CD14-positive monocyte (primary cell): ENCODE measurements at regions of chr3 and their contacts with region 1.

Region 1: GRCh38 chr3:49339945-49340800 is at the start of gene USP4:
- DNase-seq: peak; percentile 83 to 97 (median 86)
- H3K4me3 ChIP-seq: peak within 1 kb of the TSS; percentile 87 to 95 (median 89)
- H3K4me3 Mint-ChIP-seq: peak within 1 kb of the TSS; percentile 95 to 97
- H3K27ac ChIP-seq: peak within 1 kb of the TSS; percentile 98 to 99
- H3K27ac Mint-ChIP-seq: peak within 1 kb of the TSS; percentile 97 to 100 (median 100)
- H3K4me1 ChIP-seq: peaks cover 70 to 80% of the 10 kb centered on the region in 2 donors
- H3K4me1 Mint-ChIP-seq: peaks cover 55% of the 10 kb centered on the region
- H3K27me3 ChIP-seq: no peaks in the 10 kb centered on the region
- H3K27me3 Mint-ChIP-seq: peaks cover 0 to 7% (median 0%) of the 10 kb centered on the region in 3 donors
- CTCF ChIP-seq: peak; percentile 44
- polyA plus RNA-seq, gene USP4: 68.6 to 125 (median 78.9) TPM

Region 2: GRCh38 chr3:49358217-49358883 is 18.2 kb after region 1 on chr3 and contains the start of gene GPX1:
- intact Hi-C with region 1: loop called (anchors 2 kb)
- DNase-seq: peak; percentile 87 to 89 (median 88)
- H3K4me3 ChIP-seq: peak within 1 kb of the TSS; percentile 87 to 95 (median 93)
- H3K4me3 Mint-ChIP-seq: peak within 1 kb of the TSS; percentile 98 to 99
- H3K27ac ChIP-seq: peak within 1 kb of the TSS; percentile 86 to 94
- H3K27ac Mint-ChIP-seq: peak within 1 kb of the TSS; percentile 97 to 99 (median 98)
- H3K4me1 ChIP-seq: peaks cover 42 to 58% of the 10 kb centered on the region in 2 donors
- H3K4me1 Mint-ChIP-seq: peaks cover 45% of the 10 kb centered on the region
- H3K27me3 ChIP-seq: no peaks in the 10 kb centered on the region
- H3K27me3 Mint-ChIP-seq: peaks cover 2% of the 10 kb centered on the region in 3 donors
- CTCF ChIP-seq: no peak
- polyA plus RNA-seq, gene GPX1: 1,287 to 2,105 (median 1,394) TPM

Region 3: GRCh38 chr3:49370585-49371290 is 30.6 kb after region 1 on chr3:
- intact Hi-C with region 1: loop called in 1 of 2 experiments (anchors 5 kb)
- DNase-seq: no peak
- H3K4me3 ChIP-seq: no peak overlapping the region
- H3K4me3 Mint-ChIP-seq: no peak overlapping the region
- H3K27ac ChIP-seq: peak overlapping the region in 1 of 2 donors; percentile 65
- H3K27ac Mint-ChIP-seq: peak overlapping the region in 4 of 7 donors; percentile 17 to 78 (median 35)
- H3K4me1 ChIP-seq: peaks cover 16 to 30% of the 10 kb centered on the region in 2 donors
- H3K4me1 Mint-ChIP-seq: peaks cover 30% of the 10 kb centered on the region
- H3K27me3 ChIP-seq: no peaks in the 10 kb centered on the region
- H3K27me3 Mint-ChIP-seq: no peaks in the 10 kb centered on the region
- CTCF ChIP-seq: no peak

Region 4: GRCh38 chr3:49387721-49388120 is 47.5 kb after region 1 on chr3:
- intact Hi-C with region 1: loop called in 1 of 2 experiments (anchors 5 kb)
- DNase-seq: no peak
- H3K4me3 ChIP-seq: no peak overlapping the region
- H3K4me3 Mint-ChIP-seq: no peak overlapping the region
- H3K27ac ChIP-seq: peak overlapping the region; percentile 63 to 79
- H3K27ac Mint-ChIP-seq: peak overlapping the region; percentile 65 to 90 (median 85)
- H3K4me1 ChIP-seq: peaks cover 41 to 60% of the 10 kb centered on the region in 2 donors
- H3K4me1 Mint-ChIP-seq: peaks cover 62% of the 10 kb centered on the region
- H3K27me3 ChIP-seq: no peaks in the 10 kb centered on the region
- H3K27me3 Mint-ChIP-seq: peaks cover 0 to 3% (median 2%) of the 10 kb centered on the region in 3 donors
- CTCF ChIP-seq: no peak

Region 5: GRCh38 chr3:49411968-49412631 is 71.9 kb after region 1 on chr3 and contains the starts of genes RHOA and TCTA:
- intact Hi-C with region 1: loop called in 1 of 2 experiments (anchors 5 kb)
- DNase-seq: peak; percentile 100
- H3K4me3 ChIP-seq: peak within 1 kb of the TSS; percentile 91 to 99 (median 99)
- H3K4me3 Mint-ChIP-seq: peak within 1 kb of the TSS; percentile 87 to 93
- H3K27ac ChIP-seq: peak within 1 kb of the TSS; percentile 90
- H3K27ac Mint-ChIP-seq: peak within 1 kb of the TSS; percentile 91 to 96 (median 95)
- H3K4me1 ChIP-seq: peaks cover 68 to 80% of the 10 kb centered on the region in 2 donors
- H3K4me1 Mint-ChIP-seq: peaks cover 69% of the 10 kb centered on the region
- H3K27me3 ChIP-seq: no peaks in the 10 kb centered on the region
- H3K27me3 Mint-ChIP-seq: no peaks in the 10 kb centered on the region
- CTCF ChIP-seq: no peak
- polyA plus RNA-seq, gene RHOA: 624 to 1,306 (median 1,179) TPM
- polyA plus RNA-seq, gene TCTA: 22.4 to 35.5 (median 26.7) TPM

Region 6: GRCh38 chr3:49445381-49445780 is 105.2 kb after region 1 on chr3:
- intact Hi-C with region 1: loop called (anchors 5 kb)
- DNase-seq: no peak
- H3K4me3 ChIP-seq: peak overlapping the region in 1 of 3 experiments; percentile 20
- H3K4me3 Mint-ChIP-seq: no peak overlapping the region
- H3K27ac ChIP-seq: peak overlapping the region; percentile 79 to 83
- H3K27ac Mint-ChIP-seq: peak overlapping the region; percentile 87 to 95 (median 94)
- H3K4me1 ChIP-seq: peaks cover 42 to 43% of the 10 kb centered on the region in 2 donors
- H3K4me1 Mint-ChIP-seq: peaks cover 30% of the 10 kb centered on the region
- H3K27me3 ChIP-seq: no peaks in the 10 kb centered on the region
- H3K27me3 Mint-ChIP-seq: peaks cover 0 to 3% (median 0%) of the 10 kb centered on the region in 3 donors
- CTCF ChIP-seq: no peak

Region 7: DNA sequence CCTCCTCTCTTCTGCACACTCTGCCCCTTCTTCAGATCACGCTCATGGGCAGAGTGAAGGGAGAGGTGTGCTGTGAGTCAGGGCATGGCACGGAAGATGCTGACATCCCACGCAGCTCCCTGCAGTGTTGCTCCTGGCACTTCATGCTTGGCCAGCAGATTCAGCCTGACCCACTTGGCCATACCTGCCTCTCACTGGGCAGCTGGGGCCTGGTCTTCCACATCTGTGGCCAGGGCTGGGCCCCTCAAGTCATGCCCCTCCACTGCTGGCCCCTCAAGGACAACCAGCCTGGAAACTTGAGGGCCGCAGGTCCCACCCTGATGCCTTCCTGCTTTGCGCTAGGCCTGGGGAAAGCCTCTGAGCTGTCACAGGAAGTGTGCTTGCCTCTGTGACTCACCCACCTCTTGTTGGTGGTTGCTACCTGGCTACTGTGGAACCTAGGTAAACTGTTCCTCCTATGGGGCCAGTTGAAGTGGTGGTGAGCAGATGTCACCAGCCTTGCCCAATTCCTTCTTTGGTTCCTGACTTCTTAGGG is 262.8 kb after region 1 on chr3:
- intact Hi-C with region 1: no loop called
- DNase-seq: no peak
- H3K4me3 ChIP-seq: no peak overlapping the region
- H3K4me3 Mint-ChIP-seq: no peak overlapping the region
- H3K27ac ChIP-seq: no peak overlapping the region
- H3K27ac Mint-ChIP-seq: no peak overlapping the region
- H3K4me1 ChIP-seq: no peaks in the 10 kb centered on the region
- H3K4me1 Mint-ChIP-seq: peaks cover 2% of the 10 kb centered on the region
- H3K27me3 ChIP-seq: no peaks in the 10 kb centered on the region
- H3K27me3 Mint-ChIP-seq: peaks cover 0 to 4% (median 0%) of the 10 kb centered on the region in 3 donors
- CTCF ChIP-seq: no peak